Aorta (tissue), 5 donors: ENCODE measurements at regions of chr21 and their contacts with region 1.

Region 1: GRCh38 chr21:45363921-45364467 is 41.0 kb upstream of the COL18A1 start:
- DNase-seq: peak; percentile 92 to 94
- ATAC-seq: peak; percentile 89
- H3K4me3 ChIP-seq: no peak overlapping the region
- H3K27ac ChIP-seq: peak overlapping the region; percentile 86 to 97
- H3K4me1 ChIP-seq: no peaks in the 10 kb centered on the region
- H3K27me3 ChIP-seq: no peaks in the 10 kb centered on the region

Region 2: DNA sequence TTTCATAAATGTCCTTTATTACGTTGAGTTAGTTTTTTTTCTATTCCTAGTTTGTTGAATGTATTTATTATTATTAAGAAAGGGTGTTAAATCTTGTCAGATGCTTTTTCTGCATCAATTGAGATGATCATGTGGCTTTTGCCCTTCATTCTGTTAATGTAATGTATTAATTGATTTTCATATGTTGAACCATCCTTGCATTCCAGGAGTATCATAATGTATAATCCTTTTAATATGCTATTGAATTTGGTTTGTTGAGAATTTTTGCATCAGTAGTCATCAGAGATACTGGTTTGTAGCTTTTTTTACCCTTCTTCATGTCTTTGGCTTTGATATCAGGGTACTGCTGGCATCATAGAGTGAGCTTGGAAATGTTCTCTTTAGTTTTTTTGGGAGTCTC is 176.3 kb before region 1 on chr21:
- intact Hi-C with region 1: no loop called
- DNase-seq: no peak
- ATAC-seq: no peak
- H3K4me3 ChIP-seq: no peak overlapping the region
- H3K27ac ChIP-seq: no peak overlapping the region
- H3K4me1 ChIP-seq: no peaks in the 10 kb centered on the region
- H3K27me3 ChIP-seq: no peaks in the 10 kb centered on the region

Region 3: GRCh38 chr21:45319461-45320211 is 44.4 kb before region 1 on chr21:
- intact Hi-C with region 1: loop called in 1 of 2 experiments (anchors 1 kb)
- DNase-seq: peak; percentile 87 to 93
- ATAC-seq: peak; percentile 81
- H3K4me3 ChIP-seq: no peak overlapping the region
- H3K27ac ChIP-seq: peak overlapping the region; percentile 84 to 96
- H3K4me1 ChIP-seq: no peaks in the 10 kb centered on the region
- H3K27me3 ChIP-seq: no peaks in the 10 kb centered on the region

Region 4: GRCh38 chr21:45326169-45326851 is 37.7 kb before region 1 on chr21:
- intact Hi-C with region 1: loop called in 1 of 2 experiments (anchors 5 kb)
- DNase-seq: peak; percentile 46 to 65
- ATAC-seq: no peak
- H3K4me3 ChIP-seq: no peak overlapping the region
- H3K27ac ChIP-seq: no peak overlapping the region
- H3K4me1 ChIP-seq: no peaks in the 10 kb centered on the region
- H3K27me3 ChIP-seq: no peaks in the 10 kb centered on the region

Region 5: DNA sequence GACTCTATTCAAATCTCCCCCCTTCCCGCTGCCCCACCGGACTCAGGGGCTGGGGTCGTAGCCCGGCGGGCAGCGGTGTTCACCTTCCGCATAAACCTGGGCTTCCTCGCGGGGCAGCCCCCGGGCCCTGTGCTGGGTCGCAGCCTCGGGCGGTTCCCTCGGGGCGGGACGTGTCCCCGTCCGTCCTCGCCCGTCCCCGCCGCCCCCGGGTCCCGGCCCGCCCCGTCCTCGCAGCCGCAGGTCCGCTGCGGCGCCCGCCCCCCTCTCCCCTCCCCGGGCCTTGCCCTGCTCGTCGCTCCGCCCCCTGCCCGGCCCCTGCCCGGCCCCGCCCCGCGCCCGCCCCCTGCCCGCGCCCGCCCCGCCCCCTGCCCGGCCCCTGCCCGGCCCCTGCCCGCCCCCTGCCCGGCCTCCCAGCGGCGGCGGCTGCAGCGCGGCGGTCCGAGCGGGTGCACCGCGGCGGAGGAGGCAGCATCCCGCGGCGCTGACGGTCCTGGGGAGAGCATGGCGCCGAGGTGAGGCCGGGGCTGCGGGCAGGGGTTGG is 40.8 kb after region 1 on chr21 and contains the start of gene COL18A1:
- intact Hi-C with region 1: loop called in 1 of 2 experiments (anchors 2 kb)
- DNase-seq: peak; percentile 80 to 89
- ATAC-seq: peak; percentile 61
- H3K4me3 ChIP-seq: peak within 1 kb of the TSS; percentile 94
- H3K27ac ChIP-seq: peak within 1 kb of the TSS; percentile 77 to 83
- H3K4me1 ChIP-seq: no peaks in the 10 kb centered on the region
- H3K27me3 ChIP-seq: no peaks in the 10 kb centered on the region
- total RNA-seq, gene COL18A1: 289 to 301 TPM